ENCODE measurements at regions of chr17 and their contacts with region 1.

Region 1: GRCh38 chr17:77429919-77430752 is 289.4 kb downstream of the SEC14L1 start:
- DNase-seq: peak; percentile 91
- H3K4me3 ChIP-seq: no peak overlapping the region
- H3K27ac ChIP-seq: peak overlapping the region; percentile 56
- H3K4me1 ChIP-seq: peaks cover 37% of the 10 kb centered on the region
- H3K27me3 ChIP-seq: no peaks in the 10 kb centered on the region
- CTCF ChIP-seq: peak; percentile 72

Region 2: GRCh38 chr17:77331301-77331864 is 98.8 kb before region 1 on chr17:
- intact Hi-C with region 1: loop called (anchors 5 kb)
- DNase-seq: peak; percentile 97
- H3K4me3 ChIP-seq: no peak overlapping the region
- H3K27ac ChIP-seq: no peak overlapping the region
- H3K4me1 ChIP-seq: peaks cover 19% of the 10 kb centered on the region
- H3K27me3 ChIP-seq: no peaks in the 10 kb centered on the region
- CTCF ChIP-seq: peak; percentile 94

Region 3: DNA sequence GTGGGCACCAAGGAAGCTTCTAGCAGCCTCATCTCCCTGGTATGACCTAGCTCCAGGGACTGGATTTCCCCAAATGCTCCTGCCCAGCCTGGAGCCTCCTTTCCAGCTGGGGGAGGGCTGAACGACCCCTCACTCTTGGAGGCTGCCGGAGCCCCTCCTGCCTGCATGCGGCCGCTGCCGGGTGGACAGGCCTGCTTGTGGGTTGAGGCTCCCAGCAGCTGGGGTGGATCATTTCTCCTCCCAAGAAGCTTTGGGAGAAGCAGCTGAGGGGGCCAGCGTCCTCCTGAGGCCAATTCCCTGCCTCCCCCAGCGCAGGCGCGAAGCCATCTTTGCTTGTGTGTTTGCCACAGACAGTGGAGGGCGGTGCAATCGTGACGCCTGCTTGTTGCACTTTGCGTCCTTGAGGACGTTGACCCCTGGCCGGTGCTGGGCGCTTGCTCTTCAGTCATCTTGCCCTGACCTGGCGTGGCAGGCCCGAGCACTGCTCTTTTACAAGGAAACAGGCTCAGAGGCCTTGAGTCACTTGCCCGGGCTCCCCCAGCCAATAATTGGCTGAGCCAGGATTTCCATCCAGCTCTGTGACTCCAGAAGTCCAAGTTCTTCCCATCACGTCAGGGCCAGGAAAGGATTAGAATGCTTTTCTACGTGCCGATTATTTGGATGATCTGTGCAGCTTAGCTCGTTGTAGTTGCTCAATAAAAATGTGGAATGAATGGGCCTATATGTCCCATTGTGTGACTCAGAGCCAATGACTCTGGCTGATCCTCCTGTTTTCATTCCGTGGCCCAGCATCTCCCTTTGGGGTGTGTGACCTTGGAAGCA is 75.5 kb before region 1 on chr17:
- intact Hi-C with region 1: no loop called
- DNase-seq: peak; percentile 63
- H3K4me3 ChIP-seq: no peak overlapping the region
- H3K27ac ChIP-seq: peak overlapping the region; percentile 39
- H3K4me1 ChIP-seq: peaks cover 3% of the 10 kb centered on the region
- H3K27me3 ChIP-seq: no peaks in the 10 kb centered on the region
- CTCF ChIP-seq: no peak